ENCODE measurements at regions of chr4 and their contacts with region 1.

Region 1: GRCh38 chr4:44629280-44629866 is 22.1 kb downstream of the YIPF7 start:
- DNase-seq: peak; percentile 57
- H3K4me3 ChIP-seq: no peak overlapping the region
- H3K27ac ChIP-seq: no peak overlapping the region
- H3K4me1 ChIP-seq: no peaks in the 10 kb centered on the region
- CTCF ChIP-seq: peak; percentile 82

Region 2: DNA sequence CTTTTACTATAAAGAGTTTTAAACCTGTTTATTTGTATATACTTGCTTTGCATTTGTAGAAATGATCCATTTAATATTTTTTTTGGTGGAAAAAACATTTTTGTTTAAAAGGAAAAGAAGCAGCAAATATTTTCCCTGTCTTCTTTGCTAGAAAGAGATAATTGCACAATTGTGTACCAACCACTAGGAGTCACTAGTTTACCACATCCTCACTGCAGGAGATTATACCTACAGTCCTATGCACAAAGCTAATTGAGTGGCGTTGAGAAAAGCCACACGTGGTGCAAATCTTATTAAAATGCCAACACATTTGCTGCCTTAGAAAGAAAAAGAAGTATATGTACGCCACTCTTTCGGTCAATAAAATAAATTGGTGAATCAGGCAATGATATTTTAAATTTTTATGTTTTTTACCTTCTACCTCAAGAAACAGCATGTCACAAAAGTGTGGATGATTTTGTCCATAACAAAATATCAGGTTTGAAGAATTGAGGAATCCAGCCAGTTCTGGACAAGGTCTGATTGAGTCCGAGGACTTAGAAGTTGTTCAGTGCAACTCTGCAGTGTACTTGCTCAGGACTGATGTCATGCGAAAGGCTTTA is 1633.9 kb before region 1 on chr4:
- CTCF ChIA-PET with region 1: no interaction called
- POLR2A ChIA-PET with region 1: no interaction called
- intact Hi-C with region 1: loop called (anchors 10 kb)
- DNase-seq: peak; percentile 27
- H3K4me3 ChIP-seq: no peak overlapping the region
- H3K27ac ChIP-seq: no peak overlapping the region
- H3K4me1 ChIP-seq: no peaks in the 10 kb centered on the region
- CTCF ChIP-seq: peak; percentile 95

Region 3: GRCh38 chr4:43132010-43132582 is 1497.3 kb before region 1 on chr4:
- CTCF ChIA-PET with region 1: no interaction called
- POLR2A ChIA-PET with region 1: no interaction called
- intact Hi-C with region 1: loop called (anchors 10 kb)
- DNase-seq: peak; percentile 65
- H3K4me3 ChIP-seq: no peak overlapping the region
- H3K27ac ChIP-seq: no peak overlapping the region
- H3K4me1 ChIP-seq: no peaks in the 10 kb centered on the region
- CTCF ChIP-seq: peak; percentile 98

Measured in OCI-LY7 (cell line).